ENCODE measurements at regions of chr10 and their contacts with region 1.

Region 1: DNA sequence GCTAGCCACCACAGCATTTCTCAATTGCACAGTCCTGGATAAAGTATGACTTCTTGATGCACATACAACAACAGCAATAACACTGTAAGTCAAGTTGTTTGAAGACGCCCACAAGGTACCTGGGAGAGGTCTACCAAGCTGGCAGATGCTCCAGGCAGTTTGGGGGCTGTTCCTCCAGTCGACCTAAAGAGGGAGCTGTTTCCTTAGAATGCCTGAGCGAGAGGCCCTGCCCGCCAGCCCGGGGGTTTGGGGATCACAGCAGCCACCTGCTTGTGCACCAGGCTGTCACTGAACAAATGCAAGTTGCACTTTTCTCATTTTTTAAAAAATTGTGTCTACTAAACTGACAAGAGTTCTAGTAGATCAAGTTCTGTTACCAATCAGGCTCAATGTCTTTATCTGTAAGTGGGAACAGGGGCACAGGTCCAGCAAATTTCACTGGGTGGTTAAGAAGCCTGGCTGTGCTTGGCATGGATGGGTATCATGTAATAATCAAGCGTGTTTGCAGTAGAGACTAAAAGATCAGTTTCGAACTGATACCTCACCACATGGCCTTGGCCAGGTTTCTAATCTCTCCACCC is 193.8 kb upstream of the ADO start:
- H3K4me3 Mint-ChIP-seq: no peak overlapping the region
- H3K27ac Mint-ChIP-seq: peak overlapping the region; percentile 1
- H3K4me1 Mint-ChIP-seq: peaks cover 57% of the 10 kb centered on the region
- H3K27me3 Mint-ChIP-seq: no peaks in the 10 kb centered on the region

Region 2: GRCh38 chr10:62577666-62578291 is 33.0 kb before region 1 on chr10:
- intact Hi-C with region 1: no loop called
- H3K4me3 Mint-ChIP-seq: no peak overlapping the region
- H3K27ac Mint-ChIP-seq: no peak overlapping the region
- H3K4me1 Mint-ChIP-seq: peaks cover 43% of the 10 kb centered on the region
- H3K27me3 Mint-ChIP-seq: peaks cover 12% of the 10 kb centered on the region

Region 3: DNA sequence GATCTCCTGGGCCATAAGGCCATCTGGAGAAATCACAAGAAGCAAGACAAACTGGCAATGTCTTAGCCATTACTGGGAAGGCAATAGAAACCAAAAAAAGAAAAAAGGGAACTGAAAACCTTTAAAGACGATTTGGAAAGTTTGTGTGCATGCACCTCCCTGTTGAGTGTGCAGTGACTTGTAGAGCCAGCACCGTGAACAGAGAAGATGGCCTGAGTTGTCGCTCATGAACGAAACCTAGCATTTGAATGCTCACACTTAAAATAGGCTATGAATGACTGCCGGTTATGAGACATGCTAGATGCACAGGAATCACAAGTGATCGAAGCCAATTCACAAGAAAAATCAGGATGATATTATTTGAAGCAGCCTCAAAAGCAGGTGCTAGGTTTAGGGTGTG is 42.5 kb after region 1 on chr10:
- intact Hi-C with region 1: loop called (anchors 5 kb)
- H3K4me3 Mint-ChIP-seq: no peak overlapping the region
- H3K27ac Mint-ChIP-seq: peak overlapping the region; percentile 38
- H3K4me1 Mint-ChIP-seq: peaks cover 58% of the 10 kb centered on the region
- H3K27me3 Mint-ChIP-seq: no peaks in the 10 kb centered on the region